ENCODE measurements at regions of chr12 and their contacts with region 1.

Region 1: GRCh38 chr12:113048716-113049127 is 7.8 kb upstream of the DTX1 start:
- DNase-seq: peak; percentile 83
- H3K4me3 Mint-ChIP-seq: no peak overlapping the region
- H3K27ac Mint-ChIP-seq: no peak overlapping the region
- H3K4me1 Mint-ChIP-seq: peaks cover 13% of the 10 kb centered on the region
- H3K27me3 Mint-ChIP-seq: no peaks in the 10 kb centered on the region

Region 2: DNA sequence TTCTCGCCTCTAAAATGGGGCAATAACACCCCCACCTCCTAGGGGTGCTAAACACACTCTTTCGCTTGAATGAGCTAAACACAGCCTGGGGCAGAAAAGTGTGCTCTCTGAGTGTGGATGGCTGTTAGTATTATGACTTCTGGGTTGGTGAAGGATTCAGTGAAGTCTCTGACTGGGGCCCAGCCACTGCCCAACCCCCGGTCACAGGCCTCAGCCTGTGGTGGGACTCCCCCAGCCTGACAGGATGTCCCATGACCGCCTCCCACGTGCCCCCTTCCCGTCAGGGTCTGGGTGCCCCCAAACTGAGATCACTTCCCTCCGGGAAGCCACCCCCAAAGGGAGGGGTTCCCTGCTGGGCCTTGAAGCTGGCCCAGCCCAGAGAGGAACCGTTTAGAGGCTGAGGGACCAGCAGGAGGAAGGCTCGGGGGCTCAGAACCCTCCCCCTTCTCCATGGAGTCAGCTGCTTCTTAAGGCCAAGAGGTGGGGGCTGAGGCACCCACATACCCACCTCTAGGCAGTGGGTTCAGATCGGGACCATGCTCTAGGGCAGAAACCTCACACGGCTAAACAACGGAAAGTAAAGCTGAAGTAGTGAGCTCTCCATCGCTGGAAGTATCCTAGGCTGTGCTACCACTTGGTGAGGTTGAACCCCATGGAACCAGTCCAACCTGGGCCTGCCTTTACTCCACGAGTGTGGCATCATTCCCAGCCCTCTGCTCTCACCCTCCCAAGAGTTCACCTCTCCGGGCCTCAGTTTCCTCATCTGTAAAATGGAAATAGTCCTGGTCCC is 21.6 kb after region 1 on chr12:
- CTCF ChIA-PET with region 1: interaction called, 11 read pairs
- intact Hi-C with region 1: loop called (anchors 1 kb)
- DNase-seq: peak; percentile 90
- H3K4me3 Mint-ChIP-seq: peak overlapping the region; percentile 54
- H3K27ac Mint-ChIP-seq: peak overlapping the region; percentile 83
- H3K4me1 Mint-ChIP-seq: peaks cover 64% of the 10 kb centered on the region
- H3K27me3 Mint-ChIP-seq: no peaks in the 10 kb centered on the region

Region 3: GRCh38 chr12:113098446-113098896 is 49.7 kb after region 1 on chr12:
- CTCF ChIA-PET with region 1: interaction called, 84 read pairs
- intact Hi-C with region 1: loop called (anchors 1 kb)
- DNase-seq: peak; percentile 88
- H3K4me3 Mint-ChIP-seq: no peak overlapping the region
- H3K27ac Mint-ChIP-seq: no peak overlapping the region
- H3K4me1 Mint-ChIP-seq: peaks cover 18% of the 10 kb centered on the region
- H3K27me3 Mint-ChIP-seq: no peaks in the 10 kb centered on the region

Region 4: DNA sequence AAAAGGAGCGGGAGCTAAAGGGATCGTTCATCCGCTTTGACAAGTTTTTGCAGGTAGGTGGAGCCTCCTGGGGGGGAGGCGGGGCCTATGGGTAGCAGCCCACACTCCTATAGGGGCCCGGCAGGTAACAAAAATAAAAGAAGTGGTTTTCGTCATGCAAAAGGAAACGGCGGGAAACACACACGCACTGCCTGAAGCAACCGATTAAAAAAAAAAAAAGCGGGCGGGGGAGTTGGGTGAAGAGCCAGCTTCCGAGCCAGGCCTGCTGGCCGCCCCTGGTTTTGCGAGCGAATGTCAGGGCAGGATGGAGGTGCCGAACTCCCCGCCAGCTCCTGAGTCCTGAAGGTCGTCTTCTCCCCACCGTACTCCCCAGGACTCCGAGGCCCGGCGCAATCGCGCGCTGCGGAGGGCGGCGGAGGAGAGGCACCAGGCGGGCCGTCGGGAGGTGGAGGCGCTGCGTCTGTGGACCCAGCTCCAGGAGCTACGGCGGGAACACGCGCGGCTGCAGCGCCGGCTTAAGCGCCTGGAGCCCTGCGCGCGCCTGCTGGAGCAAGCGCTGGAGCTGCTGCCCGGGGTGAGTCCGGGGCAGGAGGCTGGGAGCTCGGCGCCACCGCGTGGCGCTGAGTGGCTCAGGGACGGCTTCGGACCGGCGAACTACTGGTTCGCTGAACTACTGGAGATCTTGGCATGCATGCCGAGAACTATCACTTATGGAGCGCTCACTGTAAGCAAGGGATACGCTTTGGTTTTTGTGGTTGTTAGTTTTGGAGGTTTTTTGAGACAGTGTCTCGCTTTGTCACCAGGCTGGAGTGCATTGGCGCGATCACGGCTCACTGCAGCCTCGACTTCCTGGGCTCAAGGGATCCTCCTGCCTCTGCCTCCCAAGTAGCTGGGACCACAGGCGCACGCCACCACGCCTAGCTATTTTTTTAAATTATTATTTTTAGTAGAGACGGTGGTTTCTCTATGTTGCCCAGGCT is 104.4 kb after region 1 on chr12:
- CTCF ChIA-PET with region 1: interaction called, 52 read pairs
- intact Hi-C with region 1: loop called (anchors 1 kb)
- DNase-seq: peak; percentile 85
- H3K4me3 Mint-ChIP-seq: peak overlapping the region; percentile 75
- H3K27ac Mint-ChIP-seq: no peak overlapping the region
- H3K4me1 Mint-ChIP-seq: peaks cover 17% of the 10 kb centered on the region
- H3K27me3 Mint-ChIP-seq: peaks cover 7% of the 10 kb centered on the region

Region 5: DNA sequence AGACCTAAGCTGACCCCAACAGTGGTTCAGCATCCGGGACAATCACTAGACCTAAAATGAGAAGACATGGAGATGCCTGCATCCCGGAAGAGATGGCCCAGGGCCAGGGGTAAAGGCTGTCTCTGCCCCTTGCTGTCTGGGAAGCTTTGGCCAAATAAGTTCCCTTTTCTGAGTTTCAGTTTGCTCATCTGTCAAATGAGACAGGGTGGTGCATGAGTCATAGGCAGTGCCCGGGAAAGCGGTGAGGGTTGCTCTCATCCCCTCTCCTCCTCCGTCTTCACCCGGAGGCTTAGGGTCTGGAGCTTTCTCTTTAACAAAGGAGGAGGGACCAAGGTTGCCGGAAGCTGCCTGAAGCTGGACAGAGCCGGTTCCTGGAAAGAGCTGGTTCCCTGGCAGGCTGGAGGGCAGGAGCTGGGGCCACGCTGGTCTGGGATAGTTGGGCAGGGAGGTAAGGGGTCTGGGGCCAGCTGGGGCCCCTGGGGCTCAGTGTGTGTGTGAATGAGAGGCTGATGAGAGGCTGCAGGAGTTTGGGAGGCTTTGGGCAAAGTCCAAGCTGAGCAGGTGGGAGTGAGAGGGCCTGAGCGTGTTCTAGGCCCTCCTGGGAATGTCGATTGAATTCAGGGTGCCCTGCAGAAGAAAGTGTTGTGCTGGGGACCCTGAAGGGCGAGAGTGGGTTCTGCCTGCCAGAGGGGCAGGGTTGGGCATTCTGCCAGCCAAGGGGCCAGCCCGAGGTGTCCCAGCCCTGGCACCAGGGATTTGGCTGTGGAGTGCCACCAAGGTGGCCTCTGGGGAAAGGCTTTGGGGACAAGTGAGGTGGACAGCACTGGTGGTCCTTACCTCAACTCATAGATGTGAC is 373.5 kb after region 1 on chr12 and contains the start of gene SDSL:
- CTCF ChIA-PET with region 1: no interaction called
- intact Hi-C with region 1: loop called (anchors 5 kb)
- DNase-seq: peak; percentile 66
- H3K4me3 Mint-ChIP-seq: no peak within 1 kb of the TSS
- H3K27ac Mint-ChIP-seq: no peak within 1 kb of the TSS
- H3K4me1 Mint-ChIP-seq: peaks cover 10% of the 10 kb centered on the region
- H3K27me3 Mint-ChIP-seq: peaks cover 3% of the 10 kb centered on the region
- total RNA-seq, gene SDSL: not detected

Region 6: GRCh38 chr12:113479590-113480335 is 431.0 kb after region 1 on chr12:
- CTCF ChIA-PET with region 1: no interaction called
- intact Hi-C with region 1: no loop called
- DNase-seq: peak; percentile 60
- H3K4me3 Mint-ChIP-seq: no peak overlapping the region
- H3K27ac Mint-ChIP-seq: peak overlapping the region; percentile 36
- H3K4me1 Mint-ChIP-seq: no peaks in the 10 kb centered on the region
- H3K27me3 Mint-ChIP-seq: peaks cover 74% of the 10 kb centered on the region

Measured in activated naive CD4-positive, alpha-beta T cell treated with anti-CD3 and anti-CD28 coated beads for 36 hours (primary cell).